A549 (cell line): ENCODE measurements at regions of chr15 and their contacts with region 1.

Region 1: GRCh38 chr15:98647774-98648653 is at the start of gene IGF1R:
- DNase-seq: peak; percentile 79 to 92
- ATAC-seq: peak; percentile 51 to 55
- H3K4me3 ChIP-seq: peak within 1 kb of the TSS; percentile 84
- H3K27ac ChIP-seq: peak within 1 kb of the TSS; percentile 96 to 97
- H3K4me1 ChIP-seq: peaks cover 21% of the 10 kb centered on the region
- CTCF ChIP-seq: peak; percentile 4; the same call in 2 of the 3 replicates
- EP300 ChIP-seq: peak in 1 of 2 experiments; percentile 33; a peak in 1 of 5 replicates
- POLR2A ChIP-seq: no peak
- RAD21 ChIP-seq: no peak
- polyA plus RNA-seq, gene IGF1R: 69.5 and 117 TPM in 2 replicates

Region 2: GRCh38 chr15:98442379-98442833 is 205.6 kb before region 1 on chr15:
- CTCF ChIA-PET with region 1: interaction called, 30 read pairs
- POLR2A ChIA-PET with region 1: no interaction called
- DNase-seq: peak; percentile 80 to 86
- ATAC-seq: peak; percentile 57 to 86
- H3K4me3 ChIP-seq: no peak overlapping the region
- H3K27ac ChIP-seq: no peak overlapping the region
- H3K4me1 ChIP-seq: peaks cover 8% of the 10 kb centered on the region
- CTCF ChIP-seq: peak; percentile 97
- EP300 ChIP-seq: no peak
- POLR2A ChIP-seq: no peak
- RAD21 ChIP-seq: peak; percentile 97 to 98

Region 3: DNA sequence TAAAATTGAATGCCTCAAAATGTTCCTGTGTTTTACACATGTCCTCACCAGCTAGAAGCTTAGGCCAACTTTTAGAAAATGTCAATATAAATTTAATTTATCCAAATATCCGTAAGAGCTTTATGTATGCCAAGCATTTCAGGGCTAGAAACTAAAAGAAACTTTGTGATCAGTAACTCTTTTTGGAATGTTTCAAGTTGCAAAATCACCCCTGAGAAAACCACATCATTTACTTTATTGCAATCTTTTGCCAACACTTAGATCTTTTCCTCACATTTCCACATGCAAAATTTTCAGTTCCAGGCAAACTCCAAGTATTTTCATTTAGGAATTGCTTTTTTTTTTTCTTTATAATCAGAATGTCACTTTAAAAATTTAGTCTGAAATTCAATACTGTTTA is 19.8 kb before region 1 on chr15:
- CTCF ChIA-PET with region 1: interaction called, 13 read pairs
- POLR2A ChIA-PET with region 1: no interaction called
- DNase-seq: no peak
- ATAC-seq: no peak
- H3K4me3 ChIP-seq: no peak overlapping the region
- H3K27ac ChIP-seq: no peak overlapping the region
- H3K4me1 ChIP-seq: no peaks in the 10 kb centered on the region
- CTCF ChIP-seq: no peak
- EP300 ChIP-seq: no peak
- POLR2A ChIP-seq: no peak
- RAD21 ChIP-seq: no peak

Region 4: GRCh38 chr15:98658831-98659699 is 11.1 kb after region 1 on chr15:
- CTCF ChIA-PET with region 1: interaction called, 64 read pairs
- POLR2A ChIA-PET with region 1: interaction called, 4 read pairs
- DNase-seq: peak; percentile 63 to 80
- ATAC-seq: peak; percentile 76 to 85
- H3K4me3 ChIP-seq: no peak overlapping the region
- H3K27ac ChIP-seq: peak overlapping the region in 1 of 2 experiments; percentile 45; a peak in 1 of 6 replicates
- H3K4me1 ChIP-seq: peaks cover 71% of the 10 kb centered on the region
- CTCF ChIP-seq: peak; percentile 94
- EP300 ChIP-seq: no peak
- POLR2A ChIP-seq: no peak
- RAD21 ChIP-seq: peak; percentile 75 to 82

Region 5: DNA sequence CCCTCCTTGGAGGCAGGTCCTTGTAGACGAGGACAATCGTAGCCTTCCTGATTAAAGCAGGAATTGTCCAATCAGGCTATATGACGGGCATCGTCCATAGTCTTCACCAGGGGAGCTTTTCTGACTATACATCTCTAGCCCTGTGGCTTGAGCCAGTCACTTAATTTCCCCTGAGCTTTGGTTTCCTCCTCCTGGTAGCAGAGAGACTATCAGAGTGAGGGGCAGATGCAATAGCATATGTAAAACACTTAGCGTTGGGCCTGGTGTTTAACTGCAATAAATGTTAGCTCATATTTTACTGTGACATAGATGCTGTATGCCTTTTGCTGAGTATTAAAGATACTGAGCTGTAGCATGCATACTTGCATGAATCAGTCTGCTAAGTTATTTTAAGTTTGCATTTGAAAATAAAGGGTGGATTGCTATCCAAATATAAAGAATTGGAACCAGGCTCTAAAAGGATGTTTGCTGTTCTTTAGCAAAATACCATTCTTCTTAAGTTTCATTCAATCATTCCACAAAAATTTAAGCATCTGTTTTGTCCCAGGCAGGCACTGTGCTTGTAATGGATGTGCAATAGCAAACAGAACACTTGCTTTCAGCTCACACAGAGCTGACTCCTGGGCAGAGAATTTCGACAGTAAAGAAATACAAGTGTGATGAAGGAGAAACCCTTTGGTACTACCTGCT is 208.3 kb after region 1 on chr15:
- CTCF ChIA-PET with region 1: interaction called, 16 read pairs
- POLR2A ChIA-PET with region 1: interaction called, 6 read pairs
- DNase-seq: peak in 1 of 2 experiments; percentile 77
- ATAC-seq: peak in 1 of 2 experiments; percentile 1; a peak in 3 of 6 replicates
- H3K4me3 ChIP-seq: no peak overlapping the region
- H3K27ac ChIP-seq: peak overlapping the region; percentile 95 to 97
- H3K4me1 ChIP-seq: peaks cover 88% of the 10 kb centered on the region
- CTCF ChIP-seq: no peak
- EP300 ChIP-seq: peak; percentile 77 to 92; a peak in 3 of 5 replicates
- POLR2A ChIP-seq: no peak
- RAD21 ChIP-seq: peak; percentile 2 to 30; a peak in 3 of 5 replicates

Region 6: DNA sequence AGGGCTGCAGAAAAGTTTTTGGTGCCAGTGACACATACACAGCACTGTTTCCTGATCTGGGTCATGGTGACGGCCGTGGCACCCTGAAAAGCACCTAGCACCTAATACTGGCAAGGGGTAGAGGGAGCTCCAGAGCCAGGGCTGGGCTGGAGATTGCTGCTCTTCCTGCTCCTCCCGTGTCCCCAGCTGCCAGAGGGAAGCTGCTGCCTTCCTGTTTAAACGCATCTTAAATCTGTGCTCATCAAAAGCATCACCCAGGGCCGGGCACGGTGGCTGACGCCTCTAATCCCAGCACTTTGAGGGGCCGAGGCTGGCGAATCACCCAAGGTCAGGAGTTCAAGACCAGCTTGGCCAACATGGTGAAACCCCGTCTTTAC is 761.1 kb after region 1 on chr15:
- CTCF ChIA-PET with region 1: no interaction called
- POLR2A ChIA-PET with region 1: no interaction called
- DNase-seq: peak; percentile 75 to 76
- ATAC-seq: peak; percentile 93 to 95
- H3K4me3 ChIP-seq: no peak overlapping the region
- H3K27ac ChIP-seq: peak overlapping the region in 1 of 2 experiments; percentile 42; a peak in 2 of 6 replicates
- H3K4me1 ChIP-seq: peaks cover 17% of the 10 kb centered on the region
- CTCF ChIP-seq: peak; percentile 59
- EP300 ChIP-seq: no peak
- POLR2A ChIP-seq: no peak
- RAD21 ChIP-seq: peak; percentile 76 to 82